T-cell (primary cell): ENCODE measurements at regions of chrX and their contacts with region 1.

Region 1: DNA sequence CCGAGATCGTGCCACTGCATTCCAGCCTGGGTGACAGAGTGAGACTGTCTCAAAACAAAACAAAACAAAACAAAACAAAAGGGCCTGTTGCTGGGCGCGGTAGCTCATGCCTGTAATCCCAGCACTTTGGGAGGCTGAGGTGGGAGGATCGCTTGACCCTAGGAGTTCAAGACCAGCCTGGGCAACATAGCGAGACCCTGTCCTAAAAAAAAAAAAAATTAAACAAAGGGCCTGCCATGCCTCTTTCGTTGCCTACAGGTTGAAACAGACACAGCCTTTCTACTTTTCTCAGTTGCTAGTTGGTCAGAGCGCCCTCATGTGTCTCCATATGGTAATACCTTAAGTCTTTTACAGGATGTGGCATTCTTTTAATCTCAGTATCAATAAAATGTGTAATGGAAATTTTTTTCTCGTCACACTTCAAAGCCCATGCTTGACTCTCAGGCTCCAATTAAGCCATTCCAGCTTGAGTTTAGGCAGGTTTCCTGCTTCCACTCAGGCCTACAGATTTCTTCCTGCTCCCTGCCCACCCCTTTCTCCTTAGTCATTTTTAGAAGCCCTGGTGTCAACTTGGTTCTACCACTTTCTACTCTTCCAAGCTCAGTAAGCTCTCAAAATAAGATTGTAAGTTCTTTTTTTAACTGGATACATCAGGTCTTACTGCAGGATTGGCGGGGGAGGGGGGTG is 4.7 kb upstream of the SOWAHD start:
- DNase-seq: peak in 32 of 35 experiments; percentile 18 to 86 (median 45)
- ATAC-seq: peak; percentile 31 to 60 (median 53)
- H3K4me3 ChIP-seq: no peak overlapping the region
- H3K4me3 Mint-ChIP-seq: peak overlapping the region in 2 of 3 donors; percentile 39 to 82
- H3K27ac ChIP-seq: peak overlapping the region; percentile 94
- H3K27ac Mint-ChIP-seq: peak overlapping the region; percentile 90 to 95
- H3K4me1 ChIP-seq: peaks cover 22 to 44% of the 10 kb centered on the region in 2 experiments
- H3K4me1 Mint-ChIP-seq: peaks cover 43 to 45% (median 44%) of the 10 kb centered on the region in 3 donors
- H3K27me3 ChIP-seq: no peaks in the 10 kb centered on the region
- H3K27me3 Mint-ChIP-seq: no peaks in the 10 kb centered on the region

Region 2: GRCh38 chrX:119606280-119607015 is 147.3 kb before region 1 on chrX and contains the start of gene NKRF:
- CTCF ChIA-PET with region 1: interaction called in 1 of 2 experiments, 3 read pairs
- POLR2A ChIA-PET with region 1: interaction called in 1 of 2 experiments, 10 read pairs
- DNase-seq: peak; percentile 78 to 95 (median 87)
- ATAC-seq: peak; percentile 81 to 84 (median 82)
- H3K4me3 ChIP-seq: peak within 1 kb of the TSS; percentile 72 to 92
- H3K4me3 Mint-ChIP-seq: peak within 1 kb of the TSS; percentile 89 to 93 (median 89)
- H3K27ac ChIP-seq: peak within 1 kb of the TSS; percentile 97
- H3K27ac Mint-ChIP-seq: peak within 1 kb of the TSS; percentile 94
- H3K4me1 ChIP-seq: peaks cover 3 to 19% of the 10 kb centered on the region in 2 experiments
- H3K4me1 Mint-ChIP-seq: peaks cover 36 to 47% (median 36%) of the 10 kb centered on the region in 3 donors
- H3K27me3 ChIP-seq: no peaks in the 10 kb centered on the region
- H3K27me3 Mint-ChIP-seq: no peaks in the 10 kb centered on the region
- total RNA-seq, gene NKRF: 13.0 to 14.2 (median 13.7) TPM

Region 3: DNA sequence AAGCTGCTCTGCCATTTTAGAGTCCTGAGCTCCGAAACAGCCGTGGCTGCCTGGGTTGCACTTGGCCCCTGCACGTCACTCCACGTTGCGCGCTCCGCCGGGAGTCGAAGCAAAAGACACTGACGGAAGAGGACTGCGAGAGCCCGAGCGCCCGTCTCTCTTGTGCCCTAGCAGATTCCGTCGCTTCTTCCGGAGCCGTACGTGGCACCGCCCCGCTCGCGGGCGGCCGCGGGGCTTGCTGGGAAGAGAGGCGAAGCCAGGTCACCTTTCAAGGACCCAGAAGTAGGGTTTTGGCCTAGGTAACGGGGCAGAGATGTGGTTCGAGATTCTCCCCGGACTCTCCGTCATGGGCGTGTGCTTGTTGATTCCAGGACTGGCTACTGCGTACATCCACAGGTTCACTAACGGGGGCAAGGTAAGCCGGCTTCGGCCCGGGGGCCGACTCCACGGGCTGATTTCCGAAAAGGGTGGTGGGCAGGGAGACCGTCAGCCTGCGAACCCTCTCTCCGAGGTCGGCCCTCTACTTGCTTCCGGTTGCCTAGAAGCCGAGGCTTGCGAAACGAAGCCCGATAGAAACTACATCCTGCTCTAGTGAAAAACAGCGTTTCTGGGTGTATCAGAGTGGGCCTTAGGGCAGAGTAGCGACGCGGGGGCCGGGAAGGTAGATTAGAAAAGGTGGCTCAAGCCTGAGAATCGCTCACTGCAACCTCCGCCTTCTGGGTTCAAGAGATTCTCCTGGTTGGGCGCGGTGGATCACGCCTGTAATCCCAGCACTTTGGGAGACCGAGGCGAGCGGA is 118.1 kb after region 1 on chrX and contains the starts of genes NDUFA1 and RNF113A:
- CTCF ChIA-PET with region 1: no interaction called
- POLR2A ChIA-PET with region 1: no interaction called
- DNase-seq: peak; percentile 62 to 92 (median 84)
- ATAC-seq: peak; percentile 90 to 95 (median 90)
- H3K4me3 ChIP-seq: peak within 1 kb of the TSS; percentile 69 to 84
- H3K4me3 Mint-ChIP-seq: peak within 1 kb of the TSS; percentile 93 to 100 (median 100)
- H3K27ac ChIP-seq: peak within 1 kb of the TSS; percentile 96
- H3K27ac Mint-ChIP-seq: peak within 1 kb of the TSS; percentile 97 to 100
- H3K4me1 ChIP-seq: peaks cover 2 to 20% of the 10 kb centered on the region in 2 experiments
- H3K4me1 Mint-ChIP-seq: peaks cover 14 to 37% (median 35%) of the 10 kb centered on the region in 3 donors
- H3K27me3 ChIP-seq: no peaks in the 10 kb centered on the region
- H3K27me3 Mint-ChIP-seq: no peaks in the 10 kb centered on the region
- total RNA-seq, gene NDUFA1: 56.3 to 60.8 (median 58.0) TPM
- total RNA-seq, gene RNF113A: 23.4 to 40.5 (median 36.5) TPM

Region 4: GRCh38 chrX:120200851-120201250 is 447.1 kb after region 1 on chrX:
- CTCF ChIA-PET with region 1: no interaction called
- POLR2A ChIA-PET with region 1: interaction called in 1 of 2 experiments, 10 read pairs
- DNase-seq: no peak
- ATAC-seq: no peak
- H3K4me3 ChIP-seq: no peak overlapping the region
- H3K4me3 Mint-ChIP-seq: no peak overlapping the region
- H3K27ac ChIP-seq: no peak overlapping the region
- H3K27ac Mint-ChIP-seq: no peak overlapping the region
- H3K4me1 ChIP-seq: no peaks in the 10 kb centered on the region
- H3K4me1 Mint-ChIP-seq: peaks cover 0 to 7% (median 6%) of the 10 kb centered on the region in 3 donors
- H3K27me3 ChIP-seq: no peaks in the 10 kb centered on the region
- H3K27me3 Mint-ChIP-seq: peaks cover 0 to 6% of the 10 kb centered on the region in 2 donors